Dorsolateral prefrontal cortex (tissue), 120 donors: ENCODE measurements at regions of chr20 and their contacts with region 1.

Region 1: GRCh38 chr20:19692685-19693119 is 65.4 kb upstream of the RIN2 start:
- DNase-seq: peak in 9 of 10 donors; percentile 41 to 74 (median 62)
- H3K4me3 ChIP-seq: peak overlapping the region in 20 of 59 donors; percentile 8 to 47 (median 25)
- H3K27ac ChIP-seq: no peak overlapping the region
- H3K27me3 ChIP-seq: no peaks in the 10 kb centered on the region
- CTCF ChIP-seq: peak; percentile 84 to 99 (median 94)

Region 2: GRCh38 chr20:19784511-19785172 is 91.9 kb after region 1 on chr20:
- intact Hi-C with region 1: loop called (anchors 2 to 10 kb)
- DNase-seq: peak in 5 of 10 donors; percentile 22 to 70 (median 60)
- H3K4me3 ChIP-seq: peak overlapping the region in 19 of 59 donors; percentile 5 to 33 (median 18)
- H3K27ac ChIP-seq: peak overlapping the region in 53 of 59 donors; percentile 1 to 82 (median 69)
- H3K27me3 ChIP-seq: no peaks in the 10 kb centered on the region
- CTCF ChIP-seq: peak; percentile 63 to 94 (median 84)

Region 3: DNA sequence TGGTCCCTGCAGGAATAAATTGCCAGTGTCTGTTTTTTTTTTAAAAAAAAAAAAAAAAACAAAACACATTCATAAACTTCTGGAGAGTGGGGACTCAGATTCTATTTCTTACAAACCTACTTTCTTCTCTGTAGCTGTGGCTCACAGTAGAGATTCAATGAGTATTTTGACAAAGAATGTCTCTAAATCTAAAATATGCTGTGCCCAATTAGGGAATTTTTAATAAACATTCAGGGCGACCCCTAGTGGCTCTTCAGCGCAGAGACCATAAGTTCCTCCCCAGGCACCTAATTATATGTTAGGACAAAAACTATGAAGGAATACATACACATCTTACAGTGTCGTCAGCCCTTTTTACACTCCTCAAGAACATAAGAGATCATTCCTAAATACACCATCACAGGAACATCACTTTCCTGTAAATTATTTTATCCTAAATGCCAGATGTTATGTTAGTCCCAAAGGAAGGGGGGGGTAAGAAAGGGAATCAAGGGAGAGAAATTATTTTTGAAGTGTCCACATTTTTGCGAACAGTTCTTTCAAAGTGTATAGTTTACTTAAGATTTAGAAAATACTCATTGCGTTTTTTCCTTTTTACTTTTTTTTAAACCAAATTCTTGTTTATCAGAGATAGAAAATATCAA is 302.6 kb after region 1 on chr20:
- intact Hi-C with region 1: loop called (anchors 5 kb)
- DNase-seq: peak in 3 of 10 donors; percentile 29 to 68 (median 55)
- H3K4me3 ChIP-seq: peak overlapping the region in 1 of 59 donors; percentile 2
- H3K27ac ChIP-seq: peak overlapping the region in 55 of 59 donors; percentile 7 to 89 (median 79)
- H3K27me3 ChIP-seq: no peaks in the 10 kb centered on the region
- CTCF ChIP-seq: peak; percentile 62 to 93 (median 86)

Region 4: DNA sequence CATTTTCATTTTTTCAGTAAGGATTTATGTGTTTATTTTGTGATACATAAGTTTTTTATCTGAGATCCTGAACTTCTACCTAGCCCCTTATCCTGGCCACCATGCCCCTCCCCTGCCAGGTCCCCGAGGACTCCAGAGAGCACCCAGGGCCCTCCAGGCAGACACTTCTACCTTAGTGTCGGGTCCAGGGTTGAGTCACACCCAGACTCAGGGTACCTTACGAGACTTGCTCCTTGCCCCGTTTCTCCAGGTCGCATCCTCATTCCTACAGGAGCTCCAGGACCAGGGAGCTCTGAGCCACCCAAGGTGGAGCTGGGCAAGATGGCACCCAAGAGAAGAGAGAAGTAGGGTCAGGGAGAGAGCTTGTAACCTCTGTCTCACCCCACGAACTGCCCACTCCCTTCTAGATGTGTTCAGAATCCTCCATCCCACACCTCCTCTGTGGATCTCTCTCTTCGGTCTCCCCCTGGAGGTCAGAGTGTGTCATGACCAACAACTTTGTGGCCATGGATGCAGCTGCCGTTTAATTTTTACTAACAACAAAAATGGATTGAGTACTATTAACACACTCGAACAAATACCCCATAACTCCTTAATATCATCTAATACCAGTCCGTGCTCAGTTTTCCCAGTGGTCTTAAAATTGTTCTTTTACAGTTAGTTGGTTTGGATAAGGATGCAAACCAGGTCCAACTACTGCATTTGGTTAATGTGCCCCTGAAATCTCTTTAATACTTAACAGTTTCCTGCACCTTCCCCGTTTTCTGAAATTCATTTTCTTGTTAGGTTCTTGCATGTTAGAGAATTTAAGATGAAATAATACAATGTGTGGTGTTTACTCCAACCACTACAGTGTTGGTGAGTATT is 544.6 kb after region 1 on chr20:
- intact Hi-C with region 1: loop called in 1 of 2 experiments (anchors 5 kb)
- DNase-seq: peak in 3 of 10 donors; percentile 23 to 39 (median 33)
- H3K4me3 ChIP-seq: no peak overlapping the region
- H3K27ac ChIP-seq: no peak overlapping the region
- H3K27me3 ChIP-seq: no peaks in the 10 kb centered on the region
- CTCF ChIP-seq: peak in 55 of 56 donors; percentile 23 to 83 (median 67)